MCF 10A (cell line): ENCODE measurements at regions of chr5 and their contacts with region 1.

Region 1: DNA sequence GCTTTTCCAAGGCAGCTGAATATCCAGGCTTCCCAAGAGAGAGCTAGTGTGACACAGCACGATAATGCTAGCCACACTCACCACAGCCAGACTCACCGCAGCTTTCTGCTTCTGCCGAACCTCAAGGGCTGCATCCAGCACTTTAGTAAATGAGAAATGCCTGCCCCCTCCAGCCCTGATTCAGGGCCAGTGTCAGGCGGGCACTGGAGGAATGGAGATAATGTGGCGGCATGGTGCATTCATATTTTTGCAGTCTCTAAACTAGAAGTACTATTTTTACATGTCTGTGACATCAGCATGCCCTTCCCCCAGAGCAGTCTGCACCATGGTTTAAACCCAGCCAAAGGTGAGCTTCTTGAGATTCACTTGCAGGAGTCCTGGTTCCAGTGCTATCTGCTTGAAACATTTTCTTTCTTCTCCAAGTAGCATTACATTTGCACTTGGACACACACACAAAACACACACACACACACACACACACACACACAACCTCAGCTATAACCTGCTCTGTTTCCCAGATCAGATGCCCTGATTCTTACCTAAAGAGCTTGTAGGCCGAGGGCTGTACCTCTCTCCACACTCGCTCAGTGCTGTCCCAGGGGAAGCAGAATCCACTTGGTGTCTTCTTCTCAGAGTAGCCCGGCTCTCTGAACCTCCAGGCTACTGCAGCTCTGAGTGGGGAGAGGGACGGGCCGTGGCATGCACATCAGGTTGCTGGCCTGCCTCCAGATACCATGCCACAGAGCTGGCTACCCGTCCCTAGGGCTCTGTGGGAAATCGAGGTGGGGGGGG is at the start of gene FGF1:
- DNase-seq: peak; percentile 89
- H3K4me3 Mint-ChIP-seq: peak within 1 kb of the TSS; percentile 7
- H3K27ac Mint-ChIP-seq: peak within 1 kb of the TSS; percentile 70
- H3K4me1 Mint-ChIP-seq: peaks cover 43% of the 10 kb centered on the region
- H3K27me3 Mint-ChIP-seq: no peaks in the 10 kb centered on the region
- CTCF ChIP-seq: no peak
- total RNA-seq, gene FGF1: 0.34 and 0.65 TPM in 2 replicates

Region 2: GRCh38 chr5:142644640-142645361 is 40.8 kb before region 1 on chr5:
- CTCF ChIA-PET with region 1: interaction called, 1,243 read pairs
- POLR2A ChIA-PET with region 1: interaction called, 14 read pairs
- intact Hi-C with region 1: no loop called
- DNase-seq: peak; percentile 99
- H3K4me3 Mint-ChIP-seq: peak overlapping the region; percentile 48
- H3K27ac Mint-ChIP-seq: peak overlapping the region; percentile 85
- H3K4me1 Mint-ChIP-seq: peaks cover 26% of the 10 kb centered on the region
- H3K27me3 Mint-ChIP-seq: no peaks in the 10 kb centered on the region
- CTCF ChIP-seq: no peak

Region 3: DNA sequence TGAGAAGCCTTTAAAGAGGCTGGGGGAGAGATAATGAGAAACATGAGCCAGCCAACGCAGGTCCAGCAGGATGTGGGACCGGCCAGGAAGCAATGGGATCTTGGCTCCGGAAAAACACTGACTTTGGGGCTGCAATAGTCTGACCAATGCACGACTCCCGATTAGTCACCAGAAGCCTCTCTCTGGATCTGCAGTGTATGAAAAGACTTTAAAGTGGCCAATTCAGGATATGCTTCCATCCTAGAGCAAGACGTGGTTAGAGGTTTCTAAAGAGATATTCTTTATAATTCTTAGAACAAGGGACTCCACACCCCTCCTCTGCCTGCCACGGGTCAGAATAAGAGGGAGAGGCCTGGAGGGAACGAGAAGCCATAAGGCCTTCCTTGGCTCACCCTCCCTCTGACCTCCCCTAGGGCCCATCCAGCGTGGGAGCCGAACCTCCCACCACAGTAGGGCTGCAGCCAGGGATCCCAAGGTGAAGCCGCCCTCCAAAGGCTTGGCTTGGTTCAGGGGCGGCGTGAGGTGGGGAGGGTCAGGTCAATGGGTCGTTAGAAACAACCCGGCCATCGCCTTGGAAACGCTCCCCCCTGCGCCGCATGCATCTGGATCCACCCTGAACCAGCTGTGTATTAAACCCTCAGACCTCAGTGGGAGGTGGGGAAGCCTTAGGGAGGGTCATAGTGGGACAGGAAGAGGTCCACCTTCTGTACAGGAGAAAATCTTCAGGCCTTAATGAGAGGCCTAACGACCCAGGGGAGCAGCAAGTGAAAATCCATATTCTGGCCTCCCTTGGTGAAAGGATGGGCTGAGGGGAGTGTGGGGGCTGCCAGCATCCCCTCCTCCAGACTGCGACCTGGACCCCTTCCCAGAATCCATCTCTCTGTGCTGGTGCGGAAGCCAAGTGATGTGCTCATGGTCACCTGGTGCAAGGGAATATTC is 10.8 kb before region 1 on chr5:
- CTCF ChIA-PET with region 1: interaction called, 1,243 read pairs
- POLR2A ChIA-PET with region 1: interaction called, 23 read pairs
- intact Hi-C with region 1: no loop called
- DNase-seq: peak; percentile 68
- H3K4me3 Mint-ChIP-seq: no peak overlapping the region
- H3K27ac Mint-ChIP-seq: no peak overlapping the region
- H3K4me1 Mint-ChIP-seq: peaks cover 10% of the 10 kb centered on the region
- H3K27me3 Mint-ChIP-seq: no peaks in the 10 kb centered on the region
- CTCF ChIP-seq: no peak